Upper lobe of right lung (tissue), 1 donor: ENCODE measurements at regions of chr20 and their contacts with region 1.

Region 1: GRCh38 chr20:48635433-48636310 is 192.1 kb downstream of the PREX1 start:
- DNase-seq: peak; percentile 77
- ATAC-seq: peak; percentile 72
- H3K4me3 ChIP-seq: no peak overlapping the region
- H3K27ac ChIP-seq: no peak overlapping the region
- H3K4me1 ChIP-seq: no peaks in the 10 kb centered on the region
- H3K27me3 ChIP-seq: no peaks in the 10 kb centered on the region
- CTCF ChIP-seq: peak; percentile 77

Region 2: DNA sequence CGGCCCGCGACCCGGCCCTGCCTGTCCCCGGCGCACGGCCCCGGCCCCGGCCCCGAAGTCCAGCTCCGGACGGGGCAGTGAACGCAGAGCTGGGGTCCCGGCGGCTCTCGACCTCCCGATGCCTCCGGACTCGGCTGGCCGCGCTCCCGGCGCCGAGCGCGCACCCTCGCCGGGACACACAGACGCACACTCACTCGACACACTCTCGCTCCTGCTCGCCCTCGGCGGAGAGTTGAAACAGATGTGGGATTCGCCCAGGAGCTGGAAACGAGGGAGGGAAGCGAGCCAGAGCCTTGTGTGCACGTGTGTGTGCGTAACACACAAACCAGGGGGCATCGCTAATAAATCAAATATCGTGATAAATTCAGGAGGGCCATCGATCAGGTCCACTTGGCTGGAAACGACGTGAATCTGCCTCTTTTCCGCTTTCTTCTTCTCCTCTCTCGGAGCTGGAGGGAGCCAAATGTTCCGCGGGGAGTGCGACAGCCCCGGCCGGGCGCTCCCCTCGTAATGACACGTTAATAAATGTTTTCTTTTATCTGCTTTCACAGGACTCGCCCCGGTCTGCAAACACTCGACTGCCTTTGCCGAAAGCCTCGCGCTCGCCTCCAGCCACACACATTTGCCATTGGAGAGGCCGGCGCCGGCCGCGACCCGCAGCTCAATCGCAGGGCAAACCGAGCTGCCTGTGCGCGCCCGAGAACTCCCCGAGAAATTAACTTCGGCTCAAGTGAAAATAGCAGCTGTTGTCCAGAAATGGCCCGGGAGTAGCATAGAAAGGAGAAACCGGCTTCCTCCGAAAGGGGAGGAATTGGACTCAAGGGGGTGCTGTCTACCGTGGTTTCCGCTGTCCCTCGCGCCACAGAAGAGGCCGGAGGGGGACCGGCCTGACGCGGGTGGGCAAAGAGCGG is 849.6 kb before region 1 on chr20:
- intact Hi-C with region 1: loop called (anchors 10 kb)
- DNase-seq: no peak
- ATAC-seq: peak; percentile 81
- H3K4me3 ChIP-seq: peak overlapping the region; percentile 54
- H3K27ac ChIP-seq: peak overlapping the region; percentile 71
- H3K4me1 ChIP-seq: peaks cover 19% of the 10 kb centered on the region
- H3K27me3 ChIP-seq: peaks cover 16% of the 10 kb centered on the region
- CTCF ChIP-seq: peak; percentile 58